ENCODE measurements at regions of chr12 and their contacts with region 1.

Region 1: GRCh38 chr12:123877968-123878367 is 94.7 kb downstream of the CCDC92 start:
- DNase-seq: no peak
- H3K4me3 ChIP-seq: no peak overlapping the region
- H3K27ac ChIP-seq: no peak overlapping the region
- H3K4me1 ChIP-seq: no peaks in the 10 kb centered on the region
- H3K27me3 ChIP-seq: no peaks in the 10 kb centered on the region
- CTCF ChIP-seq: no peak
- POLR2A ChIP-seq: no peak

Region 2: DNA sequence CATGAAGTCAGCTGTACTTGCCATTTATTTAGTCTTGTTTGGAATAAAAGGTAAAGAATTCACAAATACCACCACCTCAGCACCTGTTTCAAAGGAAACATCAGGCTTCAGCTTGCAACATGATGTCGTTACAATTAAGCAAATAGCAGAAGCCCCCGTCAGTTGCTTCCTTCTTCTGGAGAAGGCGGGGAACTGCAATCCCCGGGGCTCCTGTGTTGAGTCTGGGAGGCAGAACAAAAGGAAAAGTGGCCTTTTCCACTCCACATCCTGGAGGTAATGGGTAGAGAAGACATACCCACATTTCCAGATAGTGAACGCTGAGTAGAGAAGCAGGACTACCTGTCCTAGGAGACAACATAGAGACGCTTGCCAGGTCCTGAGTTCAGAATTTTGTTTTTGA is 23.1 kb before region 1 on chr12:
- intact Hi-C with region 1: loop called (anchors 1 kb)
- DNase-seq: no peak
- H3K4me3 ChIP-seq: no peak overlapping the region
- H3K27ac ChIP-seq: no peak overlapping the region
- H3K4me1 ChIP-seq: no peaks in the 10 kb centered on the region
- H3K27me3 ChIP-seq: no peaks in the 10 kb centered on the region
- CTCF ChIP-seq: no peak
- POLR2A ChIP-seq: no peak

Region 3: DNA sequence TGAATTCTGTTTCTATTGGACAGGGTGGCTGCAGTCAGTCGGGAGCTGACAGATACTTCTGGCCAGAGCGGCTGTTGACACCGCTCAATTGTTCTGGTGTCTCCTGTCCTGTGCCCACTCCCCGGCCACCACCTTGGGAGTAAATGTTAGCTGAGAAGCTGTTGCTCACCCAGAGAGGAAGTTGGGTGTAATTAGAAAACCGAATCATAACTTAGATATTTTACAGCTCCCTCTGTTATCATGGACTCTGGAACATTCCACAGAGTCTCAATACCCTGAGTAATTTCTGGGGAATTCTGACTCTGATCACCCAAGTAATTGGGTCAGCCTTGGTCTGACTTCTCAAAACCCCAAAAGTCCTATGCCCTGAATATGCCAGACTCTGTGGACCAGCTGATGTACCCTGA is 358.7 kb after region 1 on chr12:
- intact Hi-C with region 1: loop called (anchors 5 kb)
- DNase-seq: no peak
- H3K4me3 ChIP-seq: no peak overlapping the region
- H3K27ac ChIP-seq: no peak overlapping the region
- H3K4me1 ChIP-seq: no peaks in the 10 kb centered on the region
- H3K27me3 ChIP-seq: no peaks in the 10 kb centered on the region
- CTCF ChIP-seq: no peak
- POLR2A ChIP-seq: no peak

Region 4: DNA sequence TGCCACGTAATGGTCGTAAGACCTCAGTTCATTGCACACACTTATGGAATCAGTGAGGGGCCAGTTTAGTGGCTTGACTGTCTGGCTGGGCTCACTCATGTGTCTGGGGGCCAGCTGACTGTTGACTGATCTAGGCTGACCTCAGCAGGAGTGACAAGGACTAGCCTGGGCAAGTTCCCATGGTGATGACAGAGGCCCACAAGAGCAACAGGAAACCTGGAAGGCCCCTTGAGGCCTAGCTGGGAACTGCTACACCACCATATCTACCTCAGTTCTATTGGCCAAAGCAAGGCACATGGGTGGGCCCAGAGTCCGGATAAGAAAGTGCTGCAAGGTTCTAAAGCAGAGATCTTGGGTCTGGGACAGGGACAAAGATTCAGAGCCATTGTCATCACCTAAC is 395.7 kb after region 1 on chr12:
- intact Hi-C with region 1: no loop called
- DNase-seq: no peak
- H3K4me3 ChIP-seq: no peak overlapping the region
- H3K27ac ChIP-seq: no peak overlapping the region
- H3K4me1 ChIP-seq: no peaks in the 10 kb centered on the region
- H3K27me3 ChIP-seq: peaks cover 0 to 6% of the 10 kb centered on the region in 2 donors
- CTCF ChIP-seq: no peak
- POLR2A ChIP-seq: no peak

Region 5: GRCh38 chr12:124518051-124518932 is 640.3 kb after region 1 on chr12:
- intact Hi-C with region 1: no loop called
- DNase-seq: peak; percentile 99
- H3K4me3 ChIP-seq: peak overlapping the region; percentile 39 to 77 (median 71)
- H3K27ac ChIP-seq: peak overlapping the region; percentile 97
- H3K4me1 ChIP-seq: peaks cover 42 to 44% of the 10 kb centered on the region in 2 donors
- H3K27me3 ChIP-seq: no peaks in the 10 kb centered on the region
- CTCF ChIP-seq: no peak
- POLR2A ChIP-seq: peak; percentile 31

Region 6: DNA sequence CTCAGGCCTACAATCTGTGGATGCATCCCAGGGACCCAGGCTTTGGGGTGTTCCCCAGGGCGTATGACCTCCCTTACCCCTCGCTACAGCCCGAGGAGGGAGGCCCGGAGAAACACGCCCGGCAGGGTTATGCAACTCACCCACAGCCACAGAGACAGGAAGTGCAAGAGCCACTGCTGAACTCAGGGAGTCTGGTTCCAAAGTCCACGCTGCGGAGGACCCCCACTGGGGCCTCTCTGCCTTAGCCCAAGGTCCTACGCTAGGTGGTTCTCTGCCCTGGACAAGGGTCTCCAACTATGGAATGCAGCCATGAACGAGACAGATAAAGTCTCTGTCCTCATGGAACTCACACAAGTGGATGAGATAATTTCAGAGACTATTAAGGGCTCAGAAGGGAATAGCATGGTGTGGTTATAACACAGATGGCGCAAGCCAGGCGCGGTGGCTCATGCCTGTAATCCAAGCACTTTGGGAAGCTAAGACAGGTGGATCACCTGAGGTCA is 974.4 kb after region 1 on chr12:
- intact Hi-C with region 1: no loop called
- DNase-seq: no peak
- H3K4me3 ChIP-seq: no peak overlapping the region
- H3K27ac ChIP-seq: peak overlapping the region; percentile 4 to 62
- H3K4me1 ChIP-seq: peaks cover 0 to 7% of the 10 kb centered on the region in 2 donors
- H3K27me3 ChIP-seq: no peaks in the 10 kb centered on the region
- CTCF ChIP-seq: no peak
- POLR2A ChIP-seq: no peak